ENCODE measurements at regions of chr2 and their contacts with region 1.

Region 1: GRCh38 chr2:70301344-70302194 is at the start of gene FAM136A:
- DNase-seq: peak; percentile 53 to 76
- ATAC-seq: peak; percentile 88 to 89
- H3K4me3 ChIP-seq: peak within 1 kb of the TSS; percentile 90 to 100 (median 96)
- H3K27ac ChIP-seq: peak within 1 kb of the TSS; percentile 82 to 91 (median 86)
- H3K4me1 ChIP-seq: peaks cover 10% of the 10 kb centered on the region in 2 donors
- H3K27me3 ChIP-seq: no peaks in the 10 kb centered on the region
- CTCF ChIP-seq: peak; percentile 88 to 99 (median 96)
- POLR2A ChIP-seq: peak; percentile 15 to 28
- total RNA-seq, gene FAM136A: 12.7 to 23.7 (median 17.7) TPM

Region 2: DNA sequence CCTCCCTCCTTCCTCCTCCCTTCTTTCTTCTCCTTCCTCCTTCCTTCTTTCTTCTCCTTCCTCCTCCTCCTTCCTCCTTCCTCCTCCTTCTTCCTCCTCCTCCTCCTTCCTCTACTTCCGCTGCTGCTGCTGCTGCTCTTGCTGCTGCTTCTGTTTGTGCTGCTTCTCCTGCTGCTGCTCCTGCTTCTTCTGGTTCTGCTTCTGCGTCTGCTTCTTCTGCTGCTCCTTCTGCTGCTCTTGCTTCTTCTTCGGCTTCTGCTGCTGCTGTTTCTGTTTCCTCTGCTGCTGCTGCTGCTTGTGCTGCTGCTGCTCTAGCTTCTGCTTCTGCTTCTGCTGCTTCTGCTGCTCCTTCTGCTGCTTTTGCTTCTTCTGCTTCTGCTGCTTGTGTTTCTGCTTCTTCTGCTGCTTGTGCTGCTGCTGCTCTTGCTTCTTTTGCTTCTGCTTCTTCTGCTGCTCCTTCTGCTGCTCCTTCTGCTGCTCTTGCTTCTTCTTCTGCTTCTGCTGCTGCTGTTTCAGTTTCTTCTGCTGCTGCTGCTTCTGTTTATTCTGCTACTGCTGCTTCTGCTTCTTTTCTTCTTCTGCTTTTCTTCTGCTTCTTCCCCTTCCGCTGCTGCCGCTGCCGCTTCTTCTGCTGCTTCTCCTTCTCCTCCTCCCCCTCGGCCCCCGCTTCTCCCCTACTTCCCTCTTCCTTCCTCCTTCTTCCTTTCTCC is 399.2 kb before region 1 on chr2:
- in situ Hi-C with region 1: loop called in 3 of 4 experiments (anchors 10 to 25 kb)
- intact Hi-C with region 1: no loop called
- DNase-seq: no peak
- ATAC-seq: no peak
- H3K4me3 ChIP-seq: no peak overlapping the region
- H3K27ac ChIP-seq: peak overlapping the region in 1 of 4 donors; percentile 23
- H3K4me1 ChIP-seq: no peaks in the 10 kb centered on the region
- H3K27me3 ChIP-seq: no peaks in the 10 kb centered on the region
- CTCF ChIP-seq: no peak
- POLR2A ChIP-seq: no peak

Region 3: GRCh38 chr2:70190418-70191243 is 110.9 kb before region 1 on chr2 and contains the start of gene C2orf42:
- in situ Hi-C with region 1: no loop called
- intact Hi-C with region 1: loop called (anchors 2 kb)
- DNase-seq: peak; percentile 94 to 97
- ATAC-seq: peak; percentile 98
- H3K4me3 ChIP-seq: peak within 1 kb of the TSS; percentile 72 to 96 (median 88)
- H3K27ac ChIP-seq: peak within 1 kb of the TSS; percentile 92 to 99 (median 92)
- H3K4me1 ChIP-seq: peaks cover 4 to 6% of the 10 kb centered on the region in 2 donors
- H3K27me3 ChIP-seq: no peaks in the 10 kb centered on the region
- CTCF ChIP-seq: no peak
- POLR2A ChIP-seq: peak; percentile 91 to 97
- total RNA-seq, gene C2orf42: 6.3 to 10.1 (median 7.3) TPM

Region 4: GRCh38 chr2:70616168-70616694 is 314.7 kb after region 1 on chr2:
- in situ Hi-C with region 1: no loop called
- intact Hi-C with region 1: loop called (anchors 1 kb)
- DNase-seq: no peak
- ATAC-seq: no peak
- H3K4me3 ChIP-seq: no peak overlapping the region
- H3K27ac ChIP-seq: no peak overlapping the region
- H3K4me1 ChIP-seq: no peaks in the 10 kb centered on the region
- H3K27me3 ChIP-seq: no peaks in the 10 kb centered on the region
- CTCF ChIP-seq: no peak
- POLR2A ChIP-seq: no peak